CD8-positive, alpha-beta T cell (primary cell): ENCODE measurements at regions of chr12 and their contacts with region 1.

Region 1: GRCh38 chr12:28390761-28391385 is 200.6 kb downstream of the CCDC91 start:
- DNase-seq: no peak
- ATAC-seq: no peak
- H3K4me3 ChIP-seq: no peak overlapping the region
- H3K4me3 Mint-ChIP-seq: no peak overlapping the region
- H3K27ac ChIP-seq: no peak overlapping the region
- H3K27ac Mint-ChIP-seq: no peak overlapping the region
- H3K4me1 ChIP-seq: no peaks in the 10 kb centered on the region
- H3K4me1 Mint-ChIP-seq: no peaks in the 10 kb centered on the region
- H3K27me3 ChIP-seq: no peaks in the 10 kb centered on the region
- H3K27me3 Mint-ChIP-seq: no peaks in the 10 kb centered on the region
- CTCF ChIP-seq: no peak

Region 2: GRCh38 chr12:28409892-28410291 is 19.0 kb after region 1 on chr12:
- CTCF ChIA-PET with region 1: no interaction called
- POLR2A ChIA-PET with region 1: no interaction called
- intact Hi-C with region 1: loop called in 1 of 2 experiments (anchors 1 kb)
- DNase-seq: no peak
- ATAC-seq: no peak
- H3K4me3 ChIP-seq: no peak overlapping the region
- H3K4me3 Mint-ChIP-seq: no peak overlapping the region
- H3K27ac ChIP-seq: no peak overlapping the region
- H3K27ac Mint-ChIP-seq: no peak overlapping the region
- H3K4me1 ChIP-seq: no peaks in the 10 kb centered on the region
- H3K4me1 Mint-ChIP-seq: peaks cover 1% of the 10 kb centered on the region
- H3K27me3 ChIP-seq: no peaks in the 10 kb centered on the region
- H3K27me3 Mint-ChIP-seq: no peaks in the 10 kb centered on the region
- CTCF ChIP-seq: no peak